ENCODE measurements at regions of chr9 and their contacts with region 1.

Region 1: DNA sequence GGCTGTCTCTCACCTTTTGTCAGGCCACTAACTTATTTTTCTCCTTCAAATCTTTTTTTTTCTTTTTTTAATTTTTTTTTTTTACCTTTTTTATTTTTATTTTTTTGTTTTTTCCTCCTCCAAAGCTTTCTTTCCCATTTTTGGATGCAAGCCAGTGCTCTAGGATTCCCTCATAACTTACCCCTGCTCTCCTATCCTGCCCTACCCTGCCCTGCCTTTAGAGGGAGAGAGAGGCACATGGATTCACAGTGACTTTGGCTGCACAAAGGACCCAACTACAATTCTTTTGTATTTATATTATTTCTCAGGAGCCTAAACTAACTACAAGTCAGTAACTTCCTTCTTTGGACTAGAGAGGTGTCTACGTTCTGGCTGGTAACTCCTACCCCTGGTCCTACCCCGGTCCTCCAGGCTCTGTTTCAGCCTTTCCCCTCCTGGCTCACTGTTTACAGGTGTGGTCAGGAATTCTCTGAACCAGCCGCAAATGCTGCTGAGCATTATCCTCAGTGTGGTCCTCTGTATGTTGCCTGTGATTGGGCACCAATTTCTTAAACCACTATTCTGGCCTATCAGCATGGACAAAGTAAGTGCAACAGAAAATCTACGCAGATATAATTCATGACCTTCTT is 8.4 kb upstream of the RUSC2 start:
- DNase-seq: peak; percentile 56
- H3K4me3 ChIP-seq: no peak overlapping the region
- H3K27ac ChIP-seq: no peak overlapping the region
- H3K4me1 ChIP-seq: no peaks in the 10 kb centered on the region
- H3K27me3 ChIP-seq: no peaks in the 10 kb centered on the region
- CTCF ChIP-seq: peak; percentile 95 to 97

Region 2: GRCh38 chr9:34759432-34760134 is 721.9 kb before region 1 on chr9:
- CTCF ChIA-PET with region 1: no interaction called
- dilution Hi-C with region 1: no loop called
- in situ Hi-C with region 1: no loop called
- intact Hi-C with region 1: loop called (anchors 2 kb)
- DNase-seq: no peak
- H3K4me3 ChIP-seq: no peak overlapping the region
- H3K27ac ChIP-seq: no peak overlapping the region
- H3K4me1 ChIP-seq: no peaks in the 10 kb centered on the region
- H3K27me3 ChIP-seq: no peaks in the 10 kb centered on the region
- CTCF ChIP-seq: no peak

Region 3: DNA sequence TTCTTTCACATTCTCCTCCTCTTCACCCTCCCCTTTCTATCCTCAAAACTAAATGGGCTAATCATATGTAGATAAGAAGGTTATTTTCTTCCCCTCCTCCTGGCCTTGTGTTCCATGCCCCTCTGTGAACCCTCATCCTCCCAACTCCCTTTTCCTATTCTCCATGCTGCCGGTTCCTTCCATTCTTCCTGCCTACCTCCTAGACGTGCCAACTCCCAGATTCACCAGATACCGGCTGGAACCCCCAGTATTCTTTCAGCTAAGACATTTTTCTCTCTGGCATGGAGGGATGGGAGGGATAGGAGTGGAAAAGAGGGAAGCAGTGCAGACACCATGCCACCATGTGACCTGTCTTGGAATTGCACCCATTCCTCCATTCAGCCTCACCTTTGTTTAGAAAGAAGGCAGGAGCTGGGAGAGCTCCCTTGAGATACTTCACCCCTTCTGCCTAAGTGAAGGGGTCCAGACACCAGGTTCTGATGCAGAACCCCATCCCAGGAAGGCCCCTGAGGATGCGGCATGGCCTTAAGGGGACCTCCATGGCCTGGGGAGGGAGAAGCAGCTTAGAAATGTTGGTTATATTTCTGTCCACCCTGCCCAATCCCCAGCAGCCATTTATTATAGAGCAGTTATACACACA is 487.1 kb before region 1 on chr9:
- CTCF ChIA-PET with region 1: interaction called, 4 read pairs
- dilution Hi-C with region 1: no loop called
- in situ Hi-C with region 1: no loop called
- intact Hi-C with region 1: loop called (anchors 1 kb)
- DNase-seq: peak; percentile 43
- H3K4me3 ChIP-seq: no peak overlapping the region
- H3K27ac ChIP-seq: no peak overlapping the region
- H3K4me1 ChIP-seq: peaks cover 36% of the 10 kb centered on the region
- H3K27me3 ChIP-seq: no peaks in the 10 kb centered on the region
- CTCF ChIP-seq: peak; percentile 82

Region 4: DNA sequence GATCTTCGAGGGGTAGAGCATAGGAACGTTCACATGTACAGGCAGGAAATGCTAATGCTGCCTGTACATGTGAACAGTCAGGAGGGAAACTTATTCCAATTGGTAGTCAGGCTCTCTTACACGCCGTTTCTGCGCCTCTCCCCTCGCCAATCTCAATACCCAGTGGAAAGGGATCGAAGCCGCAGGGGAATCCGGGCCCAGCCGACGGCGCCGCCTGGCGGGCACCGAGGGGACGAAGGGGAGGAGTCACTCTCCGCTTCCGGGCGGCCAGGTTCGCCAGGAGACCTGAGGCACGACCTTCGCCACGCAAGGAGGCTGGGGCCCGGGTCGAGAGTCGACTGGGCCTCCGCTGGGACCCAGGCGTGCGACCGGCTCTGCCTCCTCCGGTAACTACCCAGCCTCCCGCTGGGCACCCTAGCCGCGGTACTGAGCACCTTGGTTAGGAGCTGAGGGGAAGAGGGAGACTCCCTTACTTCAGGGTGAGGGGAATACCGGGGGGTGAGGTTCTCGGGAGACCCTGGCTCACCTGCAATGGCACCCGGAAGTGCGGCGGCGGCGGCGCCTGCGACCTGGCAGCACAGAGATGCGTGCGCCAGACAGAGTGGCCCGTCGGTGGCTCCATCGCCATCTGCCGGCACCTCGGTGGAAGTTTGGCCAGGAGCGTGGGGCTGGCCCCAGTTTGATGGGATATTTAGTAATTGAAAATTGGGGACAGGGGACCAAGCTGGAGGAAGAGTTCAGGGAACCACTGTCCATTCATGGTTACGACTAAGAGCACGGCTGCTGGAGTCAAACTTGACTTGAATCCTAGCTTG is 385.2 kb before region 1 on chr9 and contains the start of gene PIGO:
- CTCF ChIA-PET with region 1: no interaction called
- dilution Hi-C with region 1: no loop called
- in situ Hi-C with region 1: no loop called
- intact Hi-C with region 1: loop called (anchors 1 kb)
- DNase-seq: peak; percentile 84
- H3K4me3 ChIP-seq: peak within 1 kb of the TSS; percentile 76 to 100 (median 82)
- H3K27ac ChIP-seq: peak within 1 kb of the TSS; percentile 91
- H3K4me1 ChIP-seq: peaks cover 7% of the 10 kb centered on the region
- H3K27me3 ChIP-seq: no peaks in the 10 kb centered on the region
- CTCF ChIP-seq: peak; percentile 93
- total RNA-seq, gene PIGO: 17.8 to 33.3 TPM

Region 5: DNA sequence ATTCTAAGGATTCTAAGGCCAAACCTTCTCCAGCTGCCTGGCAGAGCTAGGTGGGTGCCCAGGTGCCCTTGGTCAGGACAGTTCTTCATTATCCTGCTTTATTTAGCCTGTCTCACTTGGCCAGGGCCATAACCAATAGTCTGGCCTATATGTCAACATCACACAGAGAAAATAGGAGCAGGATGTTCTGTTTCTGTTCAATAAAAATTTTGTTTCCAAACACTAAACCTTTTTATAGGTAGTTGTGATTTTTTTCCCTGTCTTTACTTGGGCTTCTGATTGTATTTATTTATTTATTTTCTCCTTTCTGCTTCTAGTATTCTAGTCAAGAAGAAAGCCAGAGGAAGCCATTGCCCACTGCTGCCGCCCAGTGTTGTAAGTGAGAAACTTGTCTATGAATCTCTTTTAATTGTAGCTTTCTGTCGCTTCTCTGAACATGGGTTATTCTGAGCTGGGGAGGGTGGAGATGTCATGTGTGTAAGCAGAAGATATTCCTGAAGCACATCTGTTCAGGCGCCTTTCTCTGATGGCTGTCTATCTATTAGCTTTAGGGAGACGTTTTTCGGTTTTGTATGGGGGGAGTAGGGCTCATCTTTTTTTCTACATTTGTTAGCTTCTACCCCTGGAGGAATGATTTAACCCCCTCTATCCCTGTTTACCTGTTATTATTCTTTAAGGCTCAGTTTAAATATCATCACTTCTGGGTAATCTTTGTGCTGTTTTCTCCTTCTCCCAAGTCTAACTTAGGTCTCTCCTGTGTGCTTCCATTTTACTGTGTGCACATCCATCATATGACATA is 222.6 kb before region 1 on chr9:
- CTCF ChIA-PET with region 1: no interaction called
- dilution Hi-C with region 1: no loop called
- in situ Hi-C with region 1: no loop called
- intact Hi-C with region 1: loop called (anchors 2 kb)
- DNase-seq: peak; percentile 51
- H3K4me3 ChIP-seq: no peak overlapping the region
- H3K27ac ChIP-seq: no peak overlapping the region
- H3K4me1 ChIP-seq: no peaks in the 10 kb centered on the region
- H3K27me3 ChIP-seq: no peaks in the 10 kb centered on the region
- CTCF ChIP-seq: peak; percentile 58 to 74

Region 6: DNA sequence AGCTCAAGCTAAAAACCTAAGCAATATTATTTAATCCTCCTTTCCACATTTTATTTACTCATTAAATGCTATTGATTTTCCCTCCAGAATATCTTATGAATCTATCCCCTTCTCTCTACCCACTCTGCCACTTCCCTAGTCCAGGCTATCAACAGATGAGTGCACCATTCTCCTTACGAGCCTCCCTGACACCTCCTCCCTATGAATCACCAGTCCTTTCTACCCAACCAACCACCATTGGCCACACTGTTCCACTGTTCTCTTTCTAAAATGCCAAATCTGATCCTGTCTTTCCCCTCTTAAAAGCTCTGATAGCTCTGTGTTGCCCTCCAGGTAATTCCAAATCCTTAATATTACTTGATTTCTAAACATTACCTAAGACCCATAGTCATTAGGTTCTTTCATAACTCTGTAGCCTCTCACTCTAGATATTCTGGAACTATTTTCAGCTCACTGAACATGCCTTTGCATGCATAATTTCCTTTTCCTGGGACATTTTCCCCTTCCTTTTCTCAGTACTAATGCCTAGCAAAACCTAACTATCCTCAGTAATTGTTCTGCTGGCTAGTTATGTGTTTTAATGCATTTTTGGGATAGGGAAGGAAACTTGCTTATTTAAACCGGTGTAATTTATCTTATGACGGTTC is 193.4 kb before region 1 on chr9:
- CTCF ChIA-PET with region 1: no interaction called
- dilution Hi-C with region 1: no loop called
- in situ Hi-C with region 1: no loop called
- intact Hi-C with region 1: no loop called
- DNase-seq: peak; percentile 63
- H3K4me3 ChIP-seq: peak overlapping the region in 1 of 3 experiments; percentile 4
- H3K27ac ChIP-seq: peak overlapping the region; percentile 70
- H3K4me1 ChIP-seq: peaks cover 18% of the 10 kb centered on the region
- H3K27me3 ChIP-seq: no peaks in the 10 kb centered on the region
- CTCF ChIP-seq: no peak

Region 7: GRCh38 chr9:35646533-35647265 is 165.2 kb after region 1 on chr9:
- CTCF ChIA-PET with region 1: no interaction called
- dilution Hi-C with region 1: no loop called
- in situ Hi-C with region 1: no loop called
- intact Hi-C with region 1: loop called (anchors 2 kb)
- DNase-seq: peak; percentile 85
- H3K4me3 ChIP-seq: peak overlapping the region; percentile 62 to 95 (median 72)
- H3K27ac ChIP-seq: peak overlapping the region; percentile 85
- H3K4me1 ChIP-seq: peaks cover 6% of the 10 kb centered on the region
- H3K27me3 ChIP-seq: no peaks in the 10 kb centered on the region
- CTCF ChIP-seq: peak; percentile 77 to 98